Activated CD8-positive, alpha-beta T cell treated with anti-CD3 and anti-CD28 coated beads for 36 hours (primary cell): ENCODE measurements at regions of chr16 and their contacts with region 1.

Region 1: GRCh38 chr16:27253526-27253930 is 15.0 kb downstream of the NSMCE1 start:
- DNase-seq: peak; percentile 44
- ATAC-seq: peak; percentile 52
- H3K4me3 Mint-ChIP-seq: peak overlapping the region; percentile 50
- H3K27ac Mint-ChIP-seq: peak overlapping the region; percentile 96
- H3K4me1 Mint-ChIP-seq: peaks cover 86% of the 10 kb centered on the region
- H3K27me3 Mint-ChIP-seq: no peaks in the 10 kb centered on the region
- CTCF ChIP-seq: no peak

Region 2: DNA sequence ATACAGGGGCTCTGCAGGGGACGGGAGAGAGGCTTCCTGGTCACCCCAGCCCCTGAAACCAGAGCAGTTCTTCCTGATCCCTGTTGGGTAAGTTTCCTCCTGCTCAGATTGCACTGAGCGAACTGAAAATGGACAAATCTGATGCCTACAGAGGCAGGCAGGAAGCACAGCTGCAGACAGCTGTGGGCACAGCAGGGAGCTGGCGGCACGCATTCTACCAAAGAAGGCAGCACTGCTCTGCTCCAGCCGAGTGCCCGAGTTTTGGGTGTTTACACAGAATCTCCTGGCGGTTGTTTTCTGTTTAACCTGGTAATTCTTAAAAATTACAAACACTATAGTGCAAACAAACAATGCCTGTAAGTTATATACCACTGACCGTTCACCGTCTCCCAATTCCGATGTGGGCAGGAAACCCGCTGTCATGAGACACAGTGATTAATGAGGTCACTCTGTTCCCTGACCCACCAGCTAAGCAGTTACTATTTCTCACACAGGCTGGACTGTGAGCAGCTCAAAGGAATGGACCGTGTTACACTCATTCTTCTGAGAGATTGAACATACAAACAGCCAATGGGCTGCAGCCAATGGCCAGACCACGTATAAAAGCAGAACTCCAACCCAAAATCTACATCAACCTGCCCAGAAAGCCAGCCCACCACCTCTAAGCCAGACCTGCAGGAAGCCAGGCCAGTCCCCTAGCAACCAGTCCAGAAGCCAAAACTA is 10.5 kb before region 1 on chr16:
- CTCF ChIA-PET with region 1: interaction called, 7 read pairs
- POLR2A ChIA-PET with region 1: interaction called, 126 read pairs
- intact Hi-C with region 1: no loop called
- DNase-seq: peak; percentile 50
- ATAC-seq: peak; percentile 24
- H3K4me3 Mint-ChIP-seq: peak overlapping the region; percentile 54
- H3K27ac Mint-ChIP-seq: peak overlapping the region; percentile 79
- H3K4me1 Mint-ChIP-seq: peaks cover 91% of the 10 kb centered on the region
- H3K27me3 Mint-ChIP-seq: no peaks in the 10 kb centered on the region
- CTCF ChIP-seq: no peak

Region 3: DNA sequence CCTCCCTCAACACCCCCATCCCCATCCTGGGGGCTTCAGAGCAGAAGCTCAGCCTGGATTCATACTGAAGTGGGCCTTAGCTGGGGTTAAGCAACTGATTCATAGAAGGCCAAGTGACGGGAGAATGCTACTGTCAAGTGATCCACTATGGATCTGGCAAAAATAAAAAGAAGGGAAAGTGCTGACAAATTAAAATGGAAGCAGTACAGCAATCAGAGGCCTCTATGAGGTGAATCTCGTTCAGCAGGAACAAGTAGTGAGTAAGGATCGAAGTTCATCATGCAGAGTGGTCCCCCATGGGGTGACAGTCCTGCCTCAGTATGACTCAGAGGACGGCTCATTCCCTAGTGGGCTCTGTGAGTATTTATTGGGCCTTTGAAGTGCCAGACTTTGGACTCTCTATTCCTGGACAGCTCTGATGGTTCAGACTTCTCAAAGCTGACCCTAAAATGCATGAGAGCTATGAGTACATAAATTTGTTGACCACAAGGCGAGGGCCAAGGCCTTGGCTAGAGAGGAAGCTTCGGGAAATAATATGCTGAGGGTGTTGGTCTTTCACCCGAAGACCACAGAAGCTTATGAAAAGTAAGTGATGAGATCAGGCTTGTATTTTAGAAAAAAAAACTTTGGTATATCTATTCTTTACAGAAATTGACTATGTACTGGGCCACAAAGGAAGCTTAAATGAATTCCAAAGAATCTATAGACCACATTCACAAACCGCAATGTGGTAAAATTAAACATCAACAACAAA is 20.3 kb after region 1 on chr16:
- CTCF ChIA-PET with region 1: interaction called, 10 read pairs
- POLR2A ChIA-PET with region 1: interaction called, 8 read pairs
- intact Hi-C with region 1: no loop called
- DNase-seq: peak; percentile 73
- ATAC-seq: peak; percentile 93
- H3K4me3 Mint-ChIP-seq: peak overlapping the region; percentile 54
- H3K27ac Mint-ChIP-seq: peak overlapping the region; percentile 96
- H3K4me1 Mint-ChIP-seq: peaks cover 57% of the 10 kb centered on the region
- H3K27me3 Mint-ChIP-seq: no peaks in the 10 kb centered on the region
- CTCF ChIP-seq: peak; percentile 25

Region 4: GRCh38 chr16:27318392-27319226 is 65.1 kb after region 1 on chr16:
- CTCF ChIA-PET with region 1: interaction called, 6 read pairs
- POLR2A ChIA-PET with region 1: interaction called, 26 read pairs
- intact Hi-C with region 1: loop called (anchors 1 kb)
- DNase-seq: peak; percentile 84
- ATAC-seq: peak; percentile 76
- H3K4me3 Mint-ChIP-seq: peak overlapping the region; percentile 89
- H3K27ac Mint-ChIP-seq: peak overlapping the region; percentile 98
- H3K4me1 Mint-ChIP-seq: peaks cover 59% of the 10 kb centered on the region
- H3K27me3 Mint-ChIP-seq: no peaks in the 10 kb centered on the region
- CTCF ChIP-seq: no peak